GM12878 (cell line): ENCODE measurements at regions of chr5 and their contacts with region 1.

Region 1: DNA sequence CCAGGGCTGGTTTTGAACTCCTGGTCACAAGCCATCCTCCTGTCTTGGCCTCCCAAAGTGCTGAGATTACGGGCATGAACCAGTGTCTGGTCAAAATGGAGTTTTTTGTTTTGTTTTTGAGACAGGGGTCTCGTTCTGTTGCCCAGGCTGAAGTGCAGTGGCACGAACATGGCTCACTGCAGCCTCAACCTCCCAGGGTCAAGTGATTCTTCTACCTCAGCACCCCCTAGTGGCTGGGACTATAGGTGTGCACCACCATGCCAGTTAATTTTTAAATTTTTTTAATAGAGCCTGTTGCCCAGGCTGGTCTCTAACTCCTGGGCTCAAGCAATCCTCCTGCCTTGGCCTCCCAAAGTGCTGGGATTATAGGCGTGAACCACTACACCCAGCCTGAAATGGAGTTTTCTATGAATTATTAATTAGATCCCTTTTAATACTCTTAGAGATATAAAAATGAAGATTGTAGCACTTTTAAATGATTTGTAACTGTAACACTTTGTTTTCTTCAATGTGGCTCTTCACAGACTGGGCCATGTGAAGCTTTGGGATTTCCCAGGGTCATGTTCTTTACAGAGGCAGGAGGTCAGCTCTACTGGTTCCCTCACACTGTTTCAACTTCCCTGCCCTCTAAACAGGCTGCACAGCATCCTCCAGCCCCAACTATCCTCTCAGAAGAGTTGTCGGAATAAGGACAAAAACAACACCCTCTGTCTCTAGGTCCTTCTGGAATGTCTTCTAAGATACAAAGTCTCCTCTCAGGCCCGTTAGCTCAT is 32.7 kb upstream of the SPARC start:
- DNase-seq: no peak
- ATAC-seq: peak; percentile 45
- H3K4me3 ChIP-seq: no peak overlapping the region
- H3K27ac ChIP-seq: peak overlapping the region; percentile 94
- H3K4me1 ChIP-seq: peaks cover 55% of the 10 kb centered on the region
- H3K27me3 ChIP-seq: no peaks in the 10 kb centered on the region
- CTCF ChIP-seq: peak; percentile 28 to 58 (median 53); a peak in 5 of 6 replicates
- EP300 ChIP-seq: no peak
- POLR2A ChIP-seq: no peak
- RAD21 ChIP-seq: peak; percentile 71

Region 2: GRCh38 chr5:151564491-151564890 is 154.9 kb before region 1 on chr5:
- CTCF ChIA-PET with region 1: no interaction called
- POLR2A ChIA-PET with region 1: no interaction called
- RAD21 ChIA-PET with region 1: no interaction called
- SMC1A ChIA-PET with region 1: no interaction called
- in situ Hi-C with region 1: no loop called
- intact Hi-C with region 1: no loop called
- DNase-seq: no peak
- ATAC-seq: no peak
- H3K4me3 ChIP-seq: no peak overlapping the region
- H3K27ac ChIP-seq: no peak overlapping the region
- H3K4me1 ChIP-seq: no peaks in the 10 kb centered on the region; the same call in 1 of the 2 replicates
- H3K27me3 ChIP-seq: no peaks in the 10 kb centered on the region; a peak in 2 of 4 replicates
- CTCF ChIP-seq: no peak
- EP300 ChIP-seq: no peak
- POLR2A ChIP-seq: no peak
- RAD21 ChIP-seq: no peak

Region 3: GRCh38 chr5:151612689-151613427 is 106.6 kb before region 1 on chr5:
- CTCF ChIA-PET with region 1: interaction called, 11 read pairs
- POLR2A ChIA-PET with region 1: no interaction called
- RAD21 ChIA-PET with region 1: no interaction called
- SMC1A ChIA-PET with region 1: interaction called, 3 read pairs
- in situ Hi-C with region 1: no loop called
- intact Hi-C with region 1: no loop called
- DNase-seq: peak; percentile 45
- ATAC-seq: peak; percentile 80
- H3K4me3 ChIP-seq: no peak overlapping the region
- H3K27ac ChIP-seq: peak overlapping the region; percentile 56; the same call in 1 of the 2 replicates
- H3K4me1 ChIP-seq: peaks cover 31% of the 10 kb centered on the region
- H3K27me3 ChIP-seq: no peaks in the 10 kb centered on the region; a peak in 1 of 4 replicates
- CTCF ChIP-seq: no peak
- EP300 ChIP-seq: peak in 1 of 2 experiments; percentile 65; a peak in 3 of 4 replicates
- POLR2A ChIP-seq: no peak
- RAD21 ChIP-seq: no peak

Region 4: GRCh38 chr5:151686674-151687407 is 32.6 kb before region 1 on chr5 and contains the start of gene SPARC:
- CTCF ChIA-PET with region 1: interaction called, 23 read pairs
- POLR2A ChIA-PET with region 1: no interaction called
- RAD21 ChIA-PET with region 1: interaction called, 4 read pairs
- SMC1A ChIA-PET with region 1: interaction called, 4 read pairs
- in situ Hi-C with region 1: no loop called
- intact Hi-C with region 1: no loop called
- DNase-seq: no peak
- ATAC-seq: peak; percentile 79
- H3K4me3 ChIP-seq: peak within 1 kb of the TSS; percentile 88
- H3K27ac ChIP-seq: peak within 1 kb of the TSS; percentile 52
- H3K4me1 ChIP-seq: peaks cover 10% of the 10 kb centered on the region
- H3K27me3 ChIP-seq: no peaks in the 10 kb centered on the region
- CTCF ChIP-seq: no peak
- EP300 ChIP-seq: no peak
- POLR2A ChIP-seq: peak; percentile 71
- RAD21 ChIP-seq: no peak
- polyA plus RNA-seq, gene SPARC: 42.9 to 62.5 TPM

Region 5: DNA sequence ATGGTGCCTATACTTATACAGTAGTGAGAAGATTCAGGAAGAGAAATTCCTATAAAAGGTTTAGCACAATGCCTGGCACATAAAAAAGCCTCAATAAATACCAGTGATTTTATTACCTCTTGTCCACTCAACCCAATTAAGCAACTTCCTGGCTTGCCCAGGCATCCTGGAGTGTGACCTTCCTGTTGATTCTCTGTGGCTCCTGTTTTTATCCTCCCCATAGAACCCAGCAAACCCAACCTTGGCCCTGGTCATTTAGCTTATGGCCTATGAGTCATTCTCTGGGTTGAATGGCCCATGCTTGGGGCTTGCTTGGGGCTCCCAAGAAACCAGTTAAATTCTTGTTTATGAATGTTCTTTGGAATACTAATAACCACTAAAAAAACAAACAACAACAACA is 11.3 kb before region 1 on chr5:
- CTCF ChIA-PET with region 1: interaction called, 88 read pairs
- POLR2A ChIA-PET with region 1: interaction called, 6 read pairs
- RAD21 ChIA-PET with region 1: interaction called, 29 read pairs
- SMC1A ChIA-PET with region 1: interaction called, 103 read pairs
- in situ Hi-C with region 1: no loop called
- intact Hi-C with region 1: no loop called
- DNase-seq: no peak
- ATAC-seq: no peak
- H3K4me3 ChIP-seq: no peak overlapping the region
- H3K27ac ChIP-seq: no peak overlapping the region
- H3K4me1 ChIP-seq: peaks cover 16% of the 10 kb centered on the region
- H3K27me3 ChIP-seq: no peaks in the 10 kb centered on the region
- CTCF ChIP-seq: no peak
- EP300 ChIP-seq: no peak
- POLR2A ChIP-seq: no peak
- RAD21 ChIP-seq: no peak

Region 6: GRCh38 chr5:151740336-151740942 is 21.0 kb after region 1 on chr5:
- CTCF ChIA-PET with region 1: interaction called, 294 read pairs
- POLR2A ChIA-PET with region 1: interaction called, 36 read pairs
- RAD21 ChIA-PET with region 1: interaction called, 125 read pairs
- SMC1A ChIA-PET with region 1: interaction called, 154 read pairs
- in situ Hi-C with region 1: no loop called
- intact Hi-C with region 1: loop called (anchors 2 kb)
- DNase-seq: no peak
- ATAC-seq: peak; percentile 70
- H3K4me3 ChIP-seq: no peak overlapping the region
- H3K27ac ChIP-seq: peak overlapping the region; percentile 54
- H3K4me1 ChIP-seq: peaks cover 39% of the 10 kb centered on the region
- H3K27me3 ChIP-seq: no peaks in the 10 kb centered on the region
- CTCF ChIP-seq: peak; percentile 76 to 88 (median 81)
- EP300 ChIP-seq: no peak
- POLR2A ChIP-seq: no peak
- RAD21 ChIP-seq: peak; percentile 90

Region 7: DNA sequence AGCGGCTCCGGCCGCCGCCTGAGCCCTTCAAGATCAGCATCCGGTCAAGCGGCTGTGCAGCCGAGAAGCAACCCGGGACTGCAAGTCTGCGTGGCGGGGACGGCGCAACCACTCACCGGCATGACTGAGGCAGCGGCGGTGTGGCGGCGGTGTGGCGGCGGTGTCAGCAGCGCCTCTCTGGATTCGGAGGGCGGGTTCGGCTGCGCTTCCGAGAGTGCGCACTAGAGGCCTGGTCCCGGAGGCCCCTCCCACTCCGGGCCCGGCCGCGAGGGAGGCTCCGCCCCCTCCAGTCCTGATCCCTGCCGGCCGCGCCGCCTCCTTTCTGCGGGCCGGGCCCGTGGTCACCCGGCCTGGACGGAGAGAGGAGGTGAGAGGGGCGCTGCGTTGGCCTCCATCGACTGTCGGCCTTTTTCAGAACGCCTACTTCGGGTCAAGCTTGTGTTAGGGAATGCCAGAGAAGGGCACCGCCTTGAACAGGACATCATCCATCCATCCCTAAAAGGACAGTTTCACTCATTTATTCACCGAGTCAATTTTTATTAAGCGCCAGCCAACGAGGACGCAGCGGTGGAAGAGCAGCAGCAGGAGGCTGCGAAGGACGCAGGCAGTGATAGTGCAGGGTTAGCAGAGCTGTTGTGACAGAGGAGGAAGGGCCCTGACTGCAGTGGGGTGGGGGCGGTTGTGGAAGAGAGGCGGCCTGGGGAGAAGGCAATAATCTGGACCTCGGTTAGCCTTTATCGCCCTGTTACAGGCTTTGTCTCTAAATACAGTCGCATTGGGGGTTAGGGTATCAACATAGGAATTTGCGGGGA is 39.2 kb after region 1 on chr5 and contains the start of gene ATOX1:
- CTCF ChIA-PET with region 1: interaction called, 15 read pairs
- POLR2A ChIA-PET with region 1: interaction called, 18 read pairs
- RAD21 ChIA-PET with region 1: interaction called, 15 read pairs
- SMC1A ChIA-PET with region 1: interaction called, 25 read pairs
- in situ Hi-C with region 1: no loop called
- intact Hi-C with region 1: no loop called
- DNase-seq: peak; percentile 58
- ATAC-seq: peak; percentile 96
- H3K4me3 ChIP-seq: peak within 1 kb of the TSS; percentile 98
- H3K27ac ChIP-seq: peak within 1 kb of the TSS; percentile 86
- H3K4me1 ChIP-seq: peaks cover 23% of the 10 kb centered on the region
- H3K27me3 ChIP-seq: no peaks in the 10 kb centered on the region
- CTCF ChIP-seq: peak in 1 of 3 experiments; percentile 9; a peak in 1 of 6 replicates
- EP300 ChIP-seq: no peak
- POLR2A ChIP-seq: peak; percentile 100
- RAD21 ChIP-seq: no peak
- polyA plus RNA-seq, gene ATOX1: 576 to 642 TPM